GM23248 (cell line): ENCODE measurements at regions of chr1 and their contacts with region 1.

Region 1: GRCh38 chr1:159798893-159799292 is 3.3 kb upstream of the FCRL6 start:
- DNase-seq: peak; percentile 93
- H3K4me3 ChIP-seq: no peak overlapping the region
- H3K27ac ChIP-seq: no peak overlapping the region
- H3K4me1 ChIP-seq: no peaks in the 10 kb centered on the region; the same call in 1 of the 2 replicates
- H3K27me3 ChIP-seq: peaks cover 22% of the 10 kb centered on the region

Region 2: GRCh38 chr1:159266832-159267231 is 532.1 kb before region 1 on chr1:
- in situ Hi-C with region 1: no loop called
- DNase-seq: no peak
- H3K4me3 ChIP-seq: no peak overlapping the region
- H3K27ac ChIP-seq: no peak overlapping the region
- H3K4me1 ChIP-seq: no peaks in the 10 kb centered on the region
- H3K27me3 ChIP-seq: no peaks in the 10 kb centered on the region

Region 3: DNA sequence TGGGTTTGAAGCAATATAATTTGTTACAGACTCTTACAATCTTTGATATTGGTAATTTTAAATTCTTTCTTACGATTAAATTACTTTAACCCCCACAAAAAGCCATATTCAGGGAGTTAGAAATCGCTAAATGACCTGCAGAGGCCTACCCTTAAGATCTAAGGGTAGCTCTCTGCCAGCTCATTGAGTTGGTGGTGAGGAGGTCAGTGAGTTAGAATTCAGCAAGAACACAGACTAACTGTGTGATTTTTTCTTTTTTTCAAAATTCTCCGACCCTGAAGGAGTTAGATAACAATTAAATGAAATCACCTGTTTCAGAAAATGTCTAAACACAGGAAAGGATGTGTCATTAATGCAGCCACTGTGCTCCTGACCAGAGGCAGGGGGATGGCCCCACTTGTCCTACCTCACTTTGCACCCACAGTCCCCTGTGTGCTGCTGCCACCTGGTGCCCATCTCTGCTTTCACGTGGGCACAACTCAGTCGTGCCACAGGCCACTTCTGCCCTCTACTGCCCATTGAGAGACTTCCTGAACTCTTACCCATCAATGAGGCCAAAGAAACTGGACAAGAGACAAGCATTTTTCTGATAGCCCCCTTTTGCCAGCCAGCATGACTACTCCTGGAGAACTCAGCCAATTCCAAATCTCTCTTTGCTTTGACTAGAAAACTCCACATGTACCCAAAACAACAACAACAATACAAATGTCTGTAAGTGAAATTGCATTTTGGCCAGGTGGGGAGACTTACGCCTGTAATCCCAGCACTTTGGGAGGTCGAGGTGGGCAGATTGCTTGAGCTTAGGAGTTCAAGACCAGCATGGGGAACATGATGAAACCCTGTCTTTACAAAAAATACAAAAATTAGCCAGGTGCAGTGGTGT is 92.6 kb after region 1 on chr1:
- in situ Hi-C with region 1: loop called (anchors 5 kb)
- DNase-seq: peak; percentile 93
- H3K4me3 ChIP-seq: no peak overlapping the region
- H3K27ac ChIP-seq: no peak overlapping the region
- H3K4me1 ChIP-seq: peaks cover 21% of the 10 kb centered on the region
- H3K27me3 ChIP-seq: no peaks in the 10 kb centered on the region

Region 4: GRCh38 chr1:160006312-160006940 is 207.5 kb after region 1 on chr1:
- in situ Hi-C with region 1: loop called (anchors 10 kb)
- DNase-seq: peak; percentile 81
- H3K4me3 ChIP-seq: no peak overlapping the region
- H3K27ac ChIP-seq: no peak overlapping the region
- H3K4me1 ChIP-seq: no peaks in the 10 kb centered on the region
- H3K27me3 ChIP-seq: no peaks in the 10 kb centered on the region